Upper lobe of right lung (tissue), 1 donor: ENCODE measurements at regions of chr13 and their contacts with region 1.

Region 1: GRCh38 chr13:27826379-27827353 is 34.4 kb downstream of the GSX1 start:
- DNase-seq: peak; percentile 90
- ATAC-seq: peak; percentile 94
- H3K4me3 ChIP-seq: no peak overlapping the region
- H3K27ac ChIP-seq: no peak overlapping the region
- H3K4me1 ChIP-seq: no peaks in the 10 kb centered on the region
- H3K27me3 ChIP-seq: peaks cover 65% of the 10 kb centered on the region
- CTCF ChIP-seq: peak; percentile 92

Region 2: GRCh38 chr13:27374650-27375049 is 452.0 kb before region 1 on chr13:
- intact Hi-C with region 1: loop called (anchors 10 kb)
- DNase-seq: no peak
- ATAC-seq: peak; percentile 95
- H3K4me3 ChIP-seq: no peak overlapping the region
- H3K27ac ChIP-seq: no peak overlapping the region
- H3K4me1 ChIP-seq: peaks cover 3% of the 10 kb centered on the region
- H3K27me3 ChIP-seq: peaks cover 11% of the 10 kb centered on the region
- CTCF ChIP-seq: peak; percentile 80

Region 3: DNA sequence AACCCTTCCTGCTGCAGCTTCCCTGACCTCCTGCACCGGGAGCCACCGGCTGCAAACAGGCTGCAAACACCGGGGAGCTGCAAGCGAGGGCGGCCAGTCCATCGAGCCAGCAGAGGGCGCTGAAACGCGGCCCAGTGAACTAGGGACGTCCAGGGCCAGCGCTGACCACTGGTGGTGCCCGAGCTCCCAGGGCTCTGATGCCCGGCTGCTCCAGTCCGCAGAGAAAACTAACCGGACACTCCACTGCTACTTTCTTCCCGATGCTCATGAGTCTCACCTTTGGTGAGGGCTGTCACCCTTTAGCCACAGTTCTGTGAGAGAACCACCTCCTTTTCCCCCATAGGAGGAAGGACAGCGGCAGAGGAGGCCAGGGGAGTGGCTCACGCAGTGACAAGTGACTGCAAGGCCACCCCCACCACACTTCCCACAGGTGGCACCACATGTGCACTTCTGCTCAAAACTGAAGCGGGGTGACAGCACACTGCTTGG is 293.5 kb before region 1 on chr13:
- intact Hi-C with region 1: loop called (anchors 10 kb)
- DNase-seq: peak; percentile 94
- ATAC-seq: peak; percentile 93
- H3K4me3 ChIP-seq: peak overlapping the region; percentile 30
- H3K27ac ChIP-seq: no peak overlapping the region
- H3K4me1 ChIP-seq: peaks cover 7% of the 10 kb centered on the region
- H3K27me3 ChIP-seq: no peaks in the 10 kb centered on the region
- CTCF ChIP-seq: peak; percentile 94

Region 4: GRCh38 chr13:27644302-27644701 is 182.4 kb before region 1 on chr13:
- intact Hi-C with region 1: no loop called
- DNase-seq: no peak
- ATAC-seq: no peak
- H3K4me3 ChIP-seq: no peak overlapping the region
- H3K27ac ChIP-seq: no peak overlapping the region
- H3K4me1 ChIP-seq: peaks cover 2% of the 10 kb centered on the region
- H3K27me3 ChIP-seq: no peaks in the 10 kb centered on the region
- CTCF ChIP-seq: no peak

Region 5: GRCh38 chr13:27977476-27978300 is 151.0 kb after region 1 on chr13:
- intact Hi-C with region 1: loop called (anchors 10 kb)
- DNase-seq: peak; percentile 51
- ATAC-seq: no peak
- H3K4me3 ChIP-seq: no peak overlapping the region
- H3K27ac ChIP-seq: no peak overlapping the region
- H3K4me1 ChIP-seq: no peaks in the 10 kb centered on the region
- H3K27me3 ChIP-seq: peaks cover 98% of the 10 kb centered on the region
- CTCF ChIP-seq: no peak